ACHN (cell line): ENCODE measurements at regions of chr18 and their contacts with region 1.

Region 1: DNA sequence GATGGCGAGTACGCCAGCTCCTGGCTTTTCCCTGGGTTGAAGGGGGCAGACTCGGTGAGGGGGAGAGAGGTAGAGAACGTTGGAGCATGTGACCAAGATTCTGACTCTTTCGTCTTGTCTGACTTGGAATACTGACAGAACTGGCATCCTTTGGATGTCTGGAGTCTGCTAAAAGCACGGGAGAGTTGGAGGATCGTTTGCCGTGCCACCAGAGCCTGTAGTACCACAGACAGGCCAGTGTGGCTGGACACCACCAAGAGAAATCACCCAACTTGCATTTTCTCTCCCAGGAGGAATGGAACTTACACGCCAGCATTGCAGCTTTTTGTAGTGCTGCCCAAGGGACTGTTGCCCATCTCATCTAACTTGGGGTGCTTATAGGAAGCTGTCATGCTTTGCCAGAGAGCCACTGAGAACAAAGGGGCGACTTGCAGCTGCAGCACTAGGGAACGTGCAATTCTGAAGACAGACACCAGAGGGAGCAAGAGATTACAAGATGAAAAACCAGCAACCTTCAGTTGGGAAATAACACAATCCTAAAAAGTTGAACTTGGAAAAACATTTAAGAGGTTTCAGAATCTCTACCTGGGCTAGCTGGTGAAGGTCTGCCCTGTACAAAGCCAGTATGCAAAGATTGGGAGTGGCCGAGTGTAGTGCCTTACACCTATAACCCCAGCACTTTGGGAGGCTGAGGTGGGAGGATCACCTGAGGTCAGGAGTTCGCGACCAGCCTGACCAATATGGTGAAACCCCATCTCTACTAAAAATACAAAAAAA is 24.1 kb downstream of the PSMG2 start:
- DNase-seq: peak; percentile 59

Region 2: DNA sequence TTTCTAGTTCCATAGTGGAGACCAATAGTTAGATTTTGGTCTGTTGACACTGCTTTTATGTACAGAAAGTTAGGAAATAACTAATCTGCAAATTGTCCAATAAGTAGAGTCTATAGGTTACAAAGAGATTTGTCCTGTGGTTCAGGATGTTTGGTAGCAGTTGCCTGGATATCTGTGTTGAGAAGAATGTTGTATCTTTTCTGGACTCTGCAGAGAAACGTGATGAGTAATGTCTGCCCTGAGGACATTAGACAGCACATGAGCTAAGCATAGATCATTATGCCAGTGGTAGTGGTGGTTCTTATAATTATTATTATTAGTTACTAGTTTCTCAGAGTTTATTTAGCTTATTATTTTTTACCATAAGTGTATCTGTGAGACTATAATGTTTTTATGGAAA is 567.5 kb before region 1 on chr18:
- in situ Hi-C with region 1: no loop called
- DNase-seq: no peak

Region 3: GRCh38 chr18:12442946-12443345 is 284.0 kb before region 1 on chr18:
- in situ Hi-C with region 1: no loop called
- DNase-seq: no peak

Region 4: GRCh38 chr18:12911025-12911928 is 184.3 kb after region 1 on chr18:
- in situ Hi-C with region 1: loop called (anchors 25 kb)
- DNase-seq: no peak

Region 5: GRCh38 chr18:12958478-12958877 is 231.5 kb after region 1 on chr18:
- in situ Hi-C with region 1: no loop called
- DNase-seq: no peak